ENCODE measurements at regions of chr19 and their contacts with region 1.

Region 1: GRCh38 chr19:38402967-38403861 is at the start of gene FAM98C:
- DNase-seq: peak; percentile 97 to 99 (median 99)
- H3K4me3 ChIP-seq: peak within 1 kb of the TSS; percentile 49 to 82 (median 72)
- H3K27ac ChIP-seq: peak within 1 kb of the TSS in 1 of 2 experiments; percentile 61
- H3K4me1 ChIP-seq: peaks cover 0 to 13% (median 9%) of the 10 kb centered on the region in 4 experiments
- H3K27me3 ChIP-seq: peaks cover 0 to 21% (median 3%) of the 10 kb centered on the region in 5 experiments

Region 2: DNA sequence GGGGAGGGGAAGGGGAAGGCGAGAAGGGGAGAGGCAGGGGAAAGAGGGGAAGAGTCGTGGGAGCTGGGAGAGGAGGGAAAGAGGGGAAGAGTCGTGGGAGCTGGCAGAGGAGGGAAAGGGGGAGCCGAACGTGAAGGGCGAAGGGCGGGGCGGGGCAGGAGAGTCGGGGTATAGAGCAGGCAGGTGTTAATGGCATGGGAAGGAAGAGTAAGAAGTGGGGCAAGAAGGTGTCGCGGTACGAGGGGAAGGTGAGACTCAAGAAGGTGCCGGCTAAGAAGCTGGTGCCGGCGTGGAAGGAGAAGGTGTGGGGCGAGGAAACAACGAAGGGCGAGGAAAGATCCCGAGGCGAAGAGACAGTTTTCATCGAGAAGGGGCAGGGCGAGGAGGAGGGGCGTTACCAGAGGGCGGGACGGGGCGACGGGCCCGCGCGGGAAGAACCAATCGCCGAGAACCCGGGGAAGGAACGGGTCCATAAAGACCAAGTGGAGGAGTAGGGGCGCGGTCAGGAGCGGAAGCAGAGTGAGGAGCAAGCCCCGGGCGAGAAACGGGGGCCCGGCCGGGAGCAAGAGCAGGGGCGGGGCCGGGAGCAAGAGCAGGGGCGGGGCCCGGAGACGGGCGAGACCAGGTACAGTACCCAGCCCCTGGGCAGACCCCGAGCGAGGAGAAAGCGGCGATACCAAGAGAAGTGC is 67.1 kb before region 1 on chr19:
- CTCF ChIA-PET with region 1: no interaction called
- POLR2A ChIA-PET with region 1: no interaction called
- DNase-seq: peak; percentile 95 to 97 (median 97)
- H3K4me3 ChIP-seq: peak overlapping the region; percentile 61 to 93 (median 81)
- H3K27ac ChIP-seq: peak overlapping the region in 1 of 2 experiments; percentile 75
- H3K4me1 ChIP-seq: peaks cover 0 to 15% (median 9%) of the 10 kb centered on the region in 4 experiments
- H3K27me3 ChIP-seq: no peaks in the 10 kb centered on the region

Region 3: DNA sequence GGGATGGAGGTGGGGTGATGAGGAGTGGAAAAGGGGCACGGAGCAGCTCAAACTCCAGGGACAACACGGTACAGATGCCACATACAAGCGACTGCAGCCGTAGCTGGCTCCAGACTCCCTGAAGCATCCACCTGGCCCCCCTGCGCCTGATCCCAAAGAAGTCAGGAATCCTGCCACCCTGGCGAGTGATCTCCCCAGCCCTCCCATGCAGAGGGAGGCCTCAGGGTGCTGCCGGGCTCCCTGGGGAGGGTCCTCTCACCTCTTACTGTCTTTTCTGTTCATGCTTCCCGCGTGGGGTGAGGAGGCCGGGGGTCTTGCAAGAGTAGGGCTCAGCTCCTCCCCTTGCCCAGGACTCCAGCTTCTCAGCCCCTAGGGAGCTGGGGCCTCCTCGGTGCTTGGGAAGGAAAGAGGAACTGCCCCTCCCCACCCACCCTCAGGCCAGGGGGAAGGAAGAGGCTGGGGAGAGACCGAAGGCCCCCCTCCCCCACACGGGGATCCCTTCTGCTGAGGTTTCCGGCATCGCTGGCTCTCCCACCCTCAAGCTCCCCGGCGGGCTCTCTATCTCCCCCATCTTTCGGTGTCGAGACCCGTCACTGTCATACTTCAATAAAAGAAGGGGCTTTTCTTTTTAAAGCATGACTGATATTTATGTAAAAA is 22.7 kb after region 1 on chr19 and contains the start of gene RASGRP4:
- CTCF ChIA-PET with region 1: interaction called, 15 read pairs
- POLR2A ChIA-PET with region 1: no interaction called
- DNase-seq: peak; percentile 82 to 93 (median 92)
- H3K4me3 ChIP-seq: peak within 1 kb of the TSS; percentile 31 to 81 (median 66)
- H3K27ac ChIP-seq: peak within 1 kb of the TSS in 1 of 2 experiments; percentile 69
- H3K4me1 ChIP-seq: peaks cover 3 to 44% (median 18%) of the 10 kb centered on the region in 4 experiments
- H3K27me3 ChIP-seq: no peaks in the 10 kb centered on the region

Region 4: GRCh38 chr19:38441657-38442348 is 38.6 kb after region 1 on chr19:
- CTCF ChIA-PET with region 1: interaction called, 30 read pairs
- POLR2A ChIA-PET with region 1: no interaction called
- DNase-seq: peak; percentile 48 to 74 (median 74)
- H3K4me3 ChIP-seq: no peak overlapping the region
- H3K27ac ChIP-seq: no peak overlapping the region
- H3K4me1 ChIP-seq: peaks cover 0 to 2% (median 0%) of the 10 kb centered on the region in 4 experiments
- H3K27me3 ChIP-seq: no peaks in the 10 kb centered on the region

Region 5: GRCh38 chr19:38514812-38515633 is 111.8 kb after region 1 on chr19:
- CTCF ChIA-PET with region 1: interaction called, 12 read pairs
- POLR2A ChIA-PET with region 1: no interaction called
- DNase-seq: peak; percentile 50 to 78 (median 75)
- H3K4me3 ChIP-seq: no peak overlapping the region
- H3K27ac ChIP-seq: no peak overlapping the region
- H3K4me1 ChIP-seq: peaks cover 0 to 6% (median 0%) of the 10 kb centered on the region in 4 experiments
- H3K27me3 ChIP-seq: peaks cover 0 to 1% (median 0%) of the 10 kb centered on the region in 5 experiments

Measured in common myeloid progenitor, CD34-positive (primary cell).